ENCODE measurements at regions of chr21 and their contacts with region 1.

Region 1: DNA sequence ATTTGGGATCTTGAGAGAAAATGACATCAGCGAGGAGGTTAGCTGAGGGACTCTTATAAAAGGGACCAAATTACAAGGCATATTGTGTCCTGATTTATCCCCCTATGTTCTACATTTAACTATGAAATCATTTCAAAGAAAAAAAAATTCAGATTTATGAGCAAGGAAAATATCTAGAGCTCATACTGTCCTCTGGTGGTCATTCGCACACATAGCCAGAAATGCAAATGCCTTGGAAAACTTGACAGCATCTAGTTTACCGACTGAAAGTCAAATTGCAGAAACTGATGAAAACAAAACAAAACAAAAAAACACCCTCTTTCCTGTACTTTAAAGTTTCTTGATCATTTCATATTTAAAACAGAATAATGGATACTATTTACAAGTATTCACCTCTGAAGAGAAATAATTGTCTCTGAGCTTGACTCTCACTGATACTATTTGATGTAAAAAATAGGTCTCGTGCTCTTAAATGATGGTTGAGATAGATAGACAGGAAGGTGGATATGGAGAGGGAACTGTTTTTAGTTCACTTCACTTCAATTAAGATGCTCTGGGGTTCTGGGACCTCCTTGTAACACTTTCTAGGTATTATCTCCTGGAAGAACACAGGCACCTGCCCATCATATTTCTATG is 253.8 kb downstream of the PCP4 start:
- DNase-seq: peak; percentile 35
- H3K4me3 ChIP-seq: no peak overlapping the region
- H3K27ac ChIP-seq: no peak overlapping the region
- H3K4me1 ChIP-seq: no peaks in the 10 kb centered on the region
- H3K27me3 ChIP-seq: no peaks in the 10 kb centered on the region

Region 2: DNA sequence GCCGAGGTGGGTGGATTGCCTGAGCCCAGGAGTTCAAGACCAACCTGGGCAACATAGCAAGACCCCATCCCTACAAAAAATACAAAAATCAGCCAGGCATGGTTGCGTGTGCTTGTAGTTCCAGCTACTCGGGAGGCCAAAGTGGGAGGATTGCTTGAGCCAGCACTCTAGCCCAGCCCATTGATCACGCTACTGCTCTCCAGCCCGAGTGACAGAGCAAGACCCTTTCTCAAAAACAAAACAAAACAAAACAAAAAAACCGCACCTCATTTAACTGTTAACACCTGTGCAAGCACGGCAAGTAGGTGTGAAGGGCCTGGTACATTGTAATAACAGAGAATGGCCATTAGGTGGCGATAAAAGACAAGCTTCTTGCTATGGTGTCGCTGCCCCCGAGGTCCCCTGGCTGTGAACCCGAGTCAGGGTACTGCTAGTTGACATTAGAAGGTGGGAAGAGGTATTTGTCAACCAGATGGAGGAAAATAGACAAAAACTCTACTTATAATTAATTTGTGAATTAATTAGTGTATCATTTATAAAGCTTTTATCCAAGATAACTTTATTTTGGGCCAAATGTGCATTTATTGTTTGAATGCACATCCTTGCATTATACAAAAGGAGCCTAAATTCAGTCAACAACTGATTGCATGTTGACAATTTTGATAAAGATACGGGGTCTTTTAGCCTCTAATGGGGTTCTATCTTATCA is 602.8 kb before region 1 on chr21:
- in situ Hi-C with region 1: loop called (anchors 25 kb)
- DNase-seq: peak; percentile 53
- H3K4me3 ChIP-seq: no peak overlapping the region
- H3K27ac ChIP-seq: no peak overlapping the region
- H3K4me1 ChIP-seq: no peaks in the 10 kb centered on the region
- H3K27me3 ChIP-seq: no peaks in the 10 kb centered on the region; the same call in 1 of the 2 replicates

Region 3: DNA sequence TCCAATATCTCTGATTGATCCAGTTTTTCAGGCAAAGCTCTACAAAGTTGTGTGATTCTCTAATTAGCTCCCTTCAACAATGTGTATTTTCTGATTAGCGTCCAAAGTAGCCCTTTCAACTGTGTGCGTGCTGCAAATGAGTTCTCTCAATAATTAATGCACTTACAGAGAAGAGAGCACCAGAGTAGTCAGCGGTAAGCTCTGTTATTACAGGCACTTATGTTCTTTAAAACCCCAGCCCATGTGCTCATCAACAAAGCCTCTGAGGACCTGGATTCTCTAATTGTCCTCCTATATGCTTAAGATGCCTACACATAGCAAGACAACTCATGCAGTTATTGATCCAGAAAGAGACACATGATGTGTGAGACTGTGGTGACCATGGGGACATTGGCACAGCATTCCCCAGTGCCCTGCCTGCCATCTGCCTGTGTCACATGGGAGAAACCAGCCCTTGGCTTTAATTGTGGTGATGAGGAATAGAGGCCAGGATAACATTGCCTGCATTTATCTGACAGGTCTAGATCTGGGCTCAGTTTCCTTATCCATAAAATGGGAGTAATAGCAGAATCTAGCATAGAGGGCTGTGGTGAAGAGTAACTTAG is 102.1 kb before region 1 on chr21:
- in situ Hi-C with region 1: loop called (anchors 25 kb)
- DNase-seq: no peak
- H3K4me3 ChIP-seq: no peak overlapping the region
- H3K27ac ChIP-seq: no peak overlapping the region
- H3K4me1 ChIP-seq: no peaks in the 10 kb centered on the region
- H3K27me3 ChIP-seq: no peaks in the 10 kb centered on the region

Measured in GM23248 (cell line).